ENCODE measurements at regions of chr5 and their contacts with region 1.

Region 1: DNA sequence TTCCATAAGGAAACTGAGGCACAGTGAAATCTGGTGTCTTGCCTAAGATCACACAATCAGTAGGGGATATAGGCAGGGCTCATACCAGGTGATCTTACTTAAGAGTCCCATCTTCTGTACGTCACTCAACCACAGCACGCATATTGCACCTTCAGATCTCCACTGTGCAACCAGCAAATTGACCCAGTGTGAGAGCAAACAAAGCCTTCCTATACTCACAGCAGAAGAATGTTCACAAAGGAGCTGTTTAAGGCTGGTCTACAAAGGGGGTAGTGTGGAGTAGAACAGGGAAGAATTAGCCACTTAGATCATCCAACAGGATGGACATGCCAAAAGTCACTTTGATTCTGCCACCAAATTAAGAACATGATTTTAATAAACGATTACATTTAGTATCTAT is 305.9 kb downstream of the SLIT3 start:
- DNase-seq: no peak
- H3K4me3 ChIP-seq: no peak overlapping the region
- H3K27ac ChIP-seq: no peak overlapping the region
- H3K4me1 ChIP-seq: peaks cover 8 to 14% of the 10 kb centered on the region in 2 donors
- H3K27me3 ChIP-seq: no peaks in the 10 kb centered on the region
- CTCF ChIP-seq: no peak
- POLR2A ChIP-seq: no peak

Region 2: GRCh38 chr5:168885324-168886120 is 109.5 kb before region 1 on chr5:
- intact Hi-C with region 1: no loop called
- DNase-seq: no peak
- H3K4me3 ChIP-seq: no peak overlapping the region
- H3K27ac ChIP-seq: no peak overlapping the region
- H3K4me1 ChIP-seq: peaks cover 18 to 24% of the 10 kb centered on the region in 2 donors
- H3K27me3 ChIP-seq: no peaks in the 10 kb centered on the region
- CTCF ChIP-seq: no peak
- POLR2A ChIP-seq: no peak

Region 3: DNA sequence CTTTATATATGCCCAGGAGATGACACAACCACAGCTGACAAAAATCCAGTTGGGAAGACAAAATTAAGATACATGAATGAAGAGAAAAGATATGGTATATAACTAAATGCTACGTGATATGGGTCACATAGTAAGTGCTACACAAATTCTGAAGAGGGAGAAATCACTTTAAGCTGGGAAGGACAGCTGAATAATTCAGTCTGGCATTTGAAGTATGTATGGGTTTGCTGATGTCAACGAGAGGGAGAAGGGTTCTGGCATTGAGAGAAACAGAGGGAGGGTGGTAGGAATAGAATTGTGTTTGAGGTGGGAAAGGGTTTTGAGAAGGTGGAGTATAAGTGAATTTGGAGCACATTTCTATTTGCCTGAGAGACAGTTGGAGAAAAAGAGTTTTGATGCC is 312.6 kb after region 1 on chr5:
- intact Hi-C with region 1: loop called (anchors 5 kb)
- DNase-seq: no peak
- H3K4me3 ChIP-seq: no peak overlapping the region
- H3K27ac ChIP-seq: no peak overlapping the region
- H3K4me1 ChIP-seq: no peaks in the 10 kb centered on the region
- H3K27me3 ChIP-seq: no peaks in the 10 kb centered on the region
- CTCF ChIP-seq: no peak
- POLR2A ChIP-seq: no peak

Region 4: GRCh38 chr5:169408731-169409130 is 413.7 kb after region 1 on chr5:
- intact Hi-C with region 1: no loop called
- DNase-seq: no peak
- H3K4me3 ChIP-seq: no peak overlapping the region
- H3K27ac ChIP-seq: no peak overlapping the region
- H3K4me1 ChIP-seq: no peaks in the 10 kb centered on the region
- H3K27me3 ChIP-seq: no peaks in the 10 kb centered on the region
- CTCF ChIP-seq: no peak
- POLR2A ChIP-seq: no peak